Posterior cingulate gyrus (tissue), 11 donors: ENCODE measurements at regions of chr16 and their contacts with region 1.

Region 1: GRCh38 chr16:79767421-79768275 is 167.1 kb upstream of the MAF start:
- DNase-seq: peak in 4 of 10 donors; percentile 8 to 83 (median 48)

Region 2: GRCh38 chr16:79437764-79438751 is 329.6 kb before region 1 on chr16:
- intact Hi-C with region 1: no loop called
- DNase-seq: peak; percentile 21 to 92 (median 50)

Region 3: DNA sequence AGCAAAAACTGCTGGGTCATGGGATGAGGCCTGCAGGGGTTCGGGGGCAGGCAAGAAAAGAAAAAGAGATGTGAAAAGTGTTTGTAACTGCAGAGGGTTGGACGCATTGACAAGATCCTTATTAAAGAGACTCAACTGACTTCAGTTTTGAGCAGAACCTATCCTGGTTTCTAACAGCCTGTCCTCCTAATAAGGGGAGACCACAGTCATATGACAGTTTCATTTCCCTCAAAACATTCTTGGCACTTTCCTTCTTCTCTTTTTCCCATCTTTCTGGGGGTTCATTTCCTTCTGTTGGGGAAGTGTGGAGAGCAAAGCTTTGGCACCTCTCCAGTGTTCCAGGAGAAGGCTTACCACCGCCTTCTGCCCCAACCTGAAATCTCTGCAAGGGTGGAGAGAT is 285.6 kb before region 1 on chr16:
- intact Hi-C with region 1: no loop called
- DNase-seq: no peak

Region 4: GRCh38 chr16:79618692-79619050 is 149.0 kb before region 1 on chr16:
- intact Hi-C with region 1: no loop called
- DNase-seq: no peak

Region 5: DNA sequence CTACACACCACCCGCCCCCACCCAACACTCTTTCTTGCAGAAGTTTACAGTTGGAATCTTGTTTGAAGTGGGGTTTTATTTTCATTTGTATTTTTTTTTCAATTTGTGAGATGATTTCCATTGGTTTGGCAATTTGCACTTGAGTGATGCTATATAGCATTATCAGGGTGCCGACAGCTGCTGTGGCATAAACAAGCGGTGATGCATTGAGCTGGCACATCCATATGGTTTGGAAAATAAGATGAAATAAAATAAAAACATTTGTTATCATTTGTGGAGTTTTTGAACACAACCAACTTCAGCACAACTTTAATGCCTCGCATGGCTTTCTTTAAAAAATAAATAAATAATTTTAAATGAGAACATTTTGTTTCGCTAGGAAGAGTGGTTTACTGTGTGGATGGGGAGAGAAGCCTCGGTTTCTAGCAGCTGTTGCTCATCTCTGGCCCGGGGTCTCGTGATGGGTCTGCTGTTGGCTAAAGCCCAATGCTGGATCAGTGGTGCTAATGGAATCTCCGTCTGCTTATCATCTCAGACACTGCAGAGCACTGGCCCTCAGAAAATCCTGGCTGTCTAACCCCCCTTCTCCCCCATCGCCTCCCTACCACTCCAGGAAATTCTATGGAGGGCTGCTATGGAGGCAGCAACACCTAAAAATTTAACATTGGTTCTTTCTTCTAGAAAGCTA is 25.2 kb after region 1 on chr16:
- intact Hi-C with region 1: no loop called
- DNase-seq: no peak

Region 6: DNA sequence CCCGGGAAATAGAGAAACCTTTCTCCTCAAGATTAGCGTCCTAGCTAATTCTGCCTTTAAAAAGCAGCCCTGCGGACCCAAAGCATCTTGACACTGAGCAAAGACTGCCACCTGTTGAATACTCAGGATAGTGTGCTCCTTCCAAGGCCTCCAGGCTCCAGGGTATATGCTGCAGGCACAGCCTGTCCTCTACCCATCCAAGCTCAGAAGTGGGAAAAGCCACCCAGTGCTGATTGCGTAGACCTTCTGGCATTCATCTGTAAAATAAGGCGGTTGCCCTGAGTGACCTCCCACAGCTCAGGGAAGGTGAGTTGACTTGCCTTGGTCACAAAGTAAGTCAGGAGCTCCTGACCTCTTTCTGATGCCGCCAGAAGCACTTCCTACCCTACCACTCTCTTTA is 317.0 kb after region 1 on chr16:
- intact Hi-C with region 1: loop called (anchors 10 kb)
- DNase-seq: peak in 4 of 10 donors; percentile 9 to 44 (median 21)